ENCODE measurements at regions of chr1 and their contacts with region 1.

Region 1: GRCh38 chr1:175221666-175222175 is 29.1 kb upstream of the KIAA0040 start:
- DNase-seq: no peak
- H3K4me3 ChIP-seq: no peak overlapping the region
- H3K27ac ChIP-seq: peak overlapping the region in 1 of 4 donors; percentile 13
- H3K4me1 ChIP-seq: peaks cover 0 to 26% (median 4%) of the 10 kb centered on the region in 3 donors
- H3K27me3 ChIP-seq: peaks cover 0 to 7% (median 0%) of the 10 kb centered on the region in 4 donors
- CTCF ChIP-seq: peak in 4 of 6 experiments; percentile 30 to 47 (median 37)
- POLR2A ChIP-seq: no peak

Region 2: DNA sequence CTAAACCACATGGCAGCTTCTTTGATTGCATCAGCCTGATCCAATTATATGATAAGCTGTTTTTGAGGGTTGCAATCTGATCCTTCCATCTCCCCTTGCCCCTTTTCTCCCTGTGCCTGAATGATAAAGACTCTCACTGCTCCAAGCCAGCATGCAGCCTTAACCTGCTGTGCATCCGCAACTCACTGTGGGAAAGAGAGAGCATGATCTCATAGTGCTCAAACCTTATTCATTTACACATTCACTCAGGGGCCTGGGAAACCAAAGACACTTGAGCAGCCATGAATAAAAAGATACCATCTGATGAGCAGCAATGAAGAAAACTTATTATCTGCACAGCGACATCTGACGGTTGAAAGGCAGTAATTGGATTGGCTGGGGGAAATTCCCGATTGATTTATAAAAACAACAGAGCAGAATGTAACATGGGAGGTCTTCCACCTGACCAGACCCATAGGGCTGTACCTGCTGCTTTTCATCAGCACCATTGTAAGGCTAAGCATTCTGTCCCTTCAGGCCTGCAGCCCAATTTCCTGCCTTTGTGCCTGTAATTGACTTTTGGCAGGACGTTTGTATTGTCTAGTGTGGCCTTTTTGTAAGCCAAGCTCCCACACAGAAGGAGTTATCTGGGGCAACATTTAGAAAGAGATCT is 91.6 kb before region 1 on chr1:
- intact Hi-C with region 1: no loop called
- DNase-seq: no peak
- H3K4me3 ChIP-seq: no peak overlapping the region
- H3K27ac ChIP-seq: peak overlapping the region; percentile 46 to 77 (median 52)
- H3K4me1 ChIP-seq: peaks cover 0 to 62% (median 33%) of the 10 kb centered on the region in 3 donors
- H3K27me3 ChIP-seq: no peaks in the 10 kb centered on the region
- CTCF ChIP-seq: no peak
- POLR2A ChIP-seq: no peak

Region 3: GRCh38 chr1:175154629-175155472 is 66.9 kb before region 1 on chr1:
- intact Hi-C with region 1: loop called (anchors 10 kb)
- DNase-seq: no peak
- H3K4me3 ChIP-seq: no peak overlapping the region
- H3K27ac ChIP-seq: no peak overlapping the region
- H3K4me1 ChIP-seq: peaks cover 0 to 8% (median 0%) of the 10 kb centered on the region in 3 donors
- H3K27me3 ChIP-seq: peaks cover 0 to 49% (median 0%) of the 10 kb centered on the region in 4 donors
- CTCF ChIP-seq: peak; percentile 86 to 95 (median 90)
- POLR2A ChIP-seq: no peak

Region 4: DNA sequence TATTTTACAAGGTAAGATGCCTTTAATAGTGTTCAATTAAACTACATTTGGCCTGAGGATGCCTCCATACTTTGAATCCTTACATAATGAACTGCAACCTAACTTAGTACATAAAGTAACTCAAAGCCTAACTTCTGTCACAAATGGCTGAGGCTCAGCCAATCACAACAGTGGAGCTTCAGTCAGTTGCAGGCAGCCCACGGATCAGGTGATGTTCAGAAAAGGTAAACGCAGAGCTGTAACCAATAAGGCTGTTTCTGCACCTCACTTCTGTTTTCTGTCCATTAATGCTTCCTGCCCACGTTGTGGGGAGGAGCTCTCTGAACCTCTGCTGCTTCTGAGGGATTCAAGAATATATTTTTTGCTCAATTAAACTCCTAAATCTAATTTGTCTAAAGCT is 65.7 kb after region 1 on chr1:
- intact Hi-C with region 1: no loop called
- DNase-seq: no peak
- H3K4me3 ChIP-seq: no peak overlapping the region
- H3K27ac ChIP-seq: no peak overlapping the region
- H3K4me1 ChIP-seq: no peaks in the 10 kb centered on the region
- H3K27me3 ChIP-seq: no peaks in the 10 kb centered on the region
- CTCF ChIP-seq: no peak
- POLR2A ChIP-seq: no peak